ENCODE measurements at regions of chr20 and their contacts with region 1.

Region 1: DNA sequence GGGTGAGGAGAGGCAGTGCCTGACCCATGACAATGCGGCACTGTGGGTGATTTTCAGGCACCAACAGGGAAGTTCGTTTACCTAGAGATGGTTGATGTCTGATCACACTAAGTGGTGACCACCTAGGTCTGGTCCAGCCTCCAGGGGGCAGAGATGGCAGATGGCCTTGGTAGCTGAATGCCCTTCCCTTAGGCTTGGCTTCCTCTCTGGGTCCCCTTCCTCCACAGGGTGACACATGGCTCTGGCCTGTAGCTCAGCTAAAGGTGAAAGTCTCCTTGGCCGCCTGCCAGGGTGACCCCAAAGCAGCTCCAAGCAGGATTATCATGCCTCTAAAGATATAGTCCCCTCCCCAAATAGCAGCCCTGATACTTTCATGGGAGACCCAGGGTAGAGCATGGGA is 6.4 kb downstream of the GDAP1L1 start:
- DNase-seq: peak in 1 of 2 experiments; percentile 23
- ATAC-seq: peak in 1 of 2 experiments; percentile 62; a peak in 3 of 6 replicates
- H3K4me3 ChIP-seq: no peak overlapping the region
- H3K27ac ChIP-seq: no peak overlapping the region
- H3K4me1 ChIP-seq: no peaks in the 10 kb centered on the region
- CTCF ChIP-seq: no peak
- EP300 ChIP-seq: no peak
- POLR2A ChIP-seq: no peak
- RAD21 ChIP-seq: no peak

Region 2: DNA sequence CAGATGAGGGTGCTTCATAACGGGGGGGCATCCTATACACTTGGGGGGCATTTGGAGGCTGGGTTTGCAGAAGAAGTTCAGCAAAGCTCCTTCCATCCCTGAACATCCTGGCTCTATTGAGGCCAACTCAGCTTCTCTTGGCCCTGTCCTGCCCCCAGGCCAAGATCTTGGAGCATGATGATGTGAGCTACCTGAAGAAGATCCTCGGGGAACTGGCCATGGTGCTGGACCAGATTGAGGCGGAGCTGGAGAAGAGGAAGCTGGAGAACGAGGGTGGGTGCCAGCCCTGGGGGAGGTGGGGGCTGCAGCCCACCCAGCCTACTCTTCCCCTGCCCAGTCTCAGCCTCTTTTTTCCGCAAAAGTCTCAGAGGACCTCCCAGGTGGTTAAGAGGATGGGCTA is 10.8 kb after region 1 on chr20:
- CTCF ChIA-PET with region 1: interaction called, 11 read pairs
- POLR2A ChIA-PET with region 1: interaction called, 6 read pairs
- DNase-seq: no peak
- ATAC-seq: no peak
- H3K4me3 ChIP-seq: no peak overlapping the region
- H3K27ac ChIP-seq: no peak overlapping the region
- H3K4me1 ChIP-seq: no peaks in the 10 kb centered on the region
- CTCF ChIP-seq: no peak
- EP300 ChIP-seq: no peak
- POLR2A ChIP-seq: no peak
- RAD21 ChIP-seq: no peak

Measured in A549 (cell line).